K562 (cell line): ENCODE measurements at regions of chr2 and their contacts with region 1.

Region 1: DNA sequence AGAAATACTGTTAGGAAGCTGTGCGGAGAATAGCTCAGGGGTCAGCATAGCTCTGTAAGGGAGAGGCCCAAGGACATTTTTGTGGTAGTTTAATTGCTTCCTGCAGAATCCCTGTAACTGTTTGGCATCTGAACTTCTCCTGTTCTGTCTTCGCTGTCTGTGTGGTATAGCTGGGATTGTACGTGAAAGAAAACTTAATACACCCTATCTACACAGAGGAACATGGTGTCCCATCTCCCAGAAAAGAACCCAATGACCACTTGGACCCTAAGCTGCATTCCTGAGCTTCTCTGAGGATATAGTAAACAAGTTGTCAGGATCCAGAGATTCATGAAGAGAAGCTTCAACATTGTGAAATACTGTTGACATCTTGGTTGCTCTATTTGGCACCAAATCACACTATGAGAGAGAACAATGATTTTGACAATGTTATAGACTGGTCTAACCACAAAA is 81.3 kb downstream of the CDC42EP3 start:
- DNase-seq: no peak
- ATAC-seq: no peak
- H3K4me3 ChIP-seq: no peak overlapping the region
- H3K27ac ChIP-seq: no peak overlapping the region
- H3K4me1 ChIP-seq: peaks cover 0 to 11% of the 10 kb centered on the region in 2 experiments; a peak in 3 of 5 replicates
- H3K27me3 ChIP-seq: no peaks in the 10 kb centered on the region
- CTCF ChIP-seq: no peak
- EP300 ChIP-seq: no peak
- POLR2A ChIP-seq: no peak
- RAD21 ChIP-seq: no peak

Region 2: GRCh38 chr2:37648331-37649011 is 58.3 kb after region 1 on chr2:
- CTCF ChIA-PET with region 1: no interaction called
- POLR2A ChIA-PET with region 1: no interaction called
- in situ Hi-C with region 1: loop called (anchors 5 kb)
- intact Hi-C with region 1: no loop called
- DNase-seq: no peak
- ATAC-seq: no peak
- H3K4me3 ChIP-seq: no peak overlapping the region
- H3K27ac ChIP-seq: no peak overlapping the region
- H3K4me1 ChIP-seq: no peaks in the 10 kb centered on the region; a peak in 1 of 5 replicates
- H3K27me3 ChIP-seq: no peaks in the 10 kb centered on the region
- CTCF ChIP-seq: no peak
- EP300 ChIP-seq: no peak
- POLR2A ChIP-seq: no peak
- RAD21 ChIP-seq: no peak

Region 3: DNA sequence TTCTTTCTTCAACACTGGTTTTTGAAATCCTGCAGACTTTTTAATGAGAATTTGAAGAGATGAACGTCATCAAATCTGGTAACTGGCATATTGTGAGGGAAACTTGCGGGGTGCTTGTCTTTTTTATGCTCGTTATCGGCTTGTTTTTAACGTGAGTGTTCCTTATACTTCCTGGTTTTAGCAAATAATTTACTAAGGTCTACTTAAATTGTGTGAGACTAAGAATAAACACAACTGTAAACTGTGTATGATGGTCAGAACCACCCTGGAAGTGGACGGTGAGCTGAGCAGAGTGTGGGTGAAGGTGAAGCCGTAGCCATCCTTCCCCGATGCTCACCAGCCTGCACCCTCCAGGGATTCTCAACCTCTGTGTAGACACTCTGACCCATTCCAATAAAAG is 163.6 kb after region 1 on chr2:
- CTCF ChIA-PET with region 1: no interaction called
- POLR2A ChIA-PET with region 1: no interaction called
- in situ Hi-C with region 1: no loop called
- intact Hi-C with region 1: no loop called
- DNase-seq: no peak
- ATAC-seq: no peak
- H3K4me3 ChIP-seq: no peak overlapping the region
- H3K27ac ChIP-seq: no peak overlapping the region
- H3K4me1 ChIP-seq: no peaks in the 10 kb centered on the region
- H3K27me3 ChIP-seq: no peaks in the 10 kb centered on the region; a peak in 1 of 5 replicates
- CTCF ChIP-seq: no peak
- EP300 ChIP-seq: no peak
- POLR2A ChIP-seq: no peak
- RAD21 ChIP-seq: no peak